CD8-positive, alpha-beta T cell (primary cell): ENCODE measurements at regions of chr17 and their contacts with region 1.

Region 1: DNA sequence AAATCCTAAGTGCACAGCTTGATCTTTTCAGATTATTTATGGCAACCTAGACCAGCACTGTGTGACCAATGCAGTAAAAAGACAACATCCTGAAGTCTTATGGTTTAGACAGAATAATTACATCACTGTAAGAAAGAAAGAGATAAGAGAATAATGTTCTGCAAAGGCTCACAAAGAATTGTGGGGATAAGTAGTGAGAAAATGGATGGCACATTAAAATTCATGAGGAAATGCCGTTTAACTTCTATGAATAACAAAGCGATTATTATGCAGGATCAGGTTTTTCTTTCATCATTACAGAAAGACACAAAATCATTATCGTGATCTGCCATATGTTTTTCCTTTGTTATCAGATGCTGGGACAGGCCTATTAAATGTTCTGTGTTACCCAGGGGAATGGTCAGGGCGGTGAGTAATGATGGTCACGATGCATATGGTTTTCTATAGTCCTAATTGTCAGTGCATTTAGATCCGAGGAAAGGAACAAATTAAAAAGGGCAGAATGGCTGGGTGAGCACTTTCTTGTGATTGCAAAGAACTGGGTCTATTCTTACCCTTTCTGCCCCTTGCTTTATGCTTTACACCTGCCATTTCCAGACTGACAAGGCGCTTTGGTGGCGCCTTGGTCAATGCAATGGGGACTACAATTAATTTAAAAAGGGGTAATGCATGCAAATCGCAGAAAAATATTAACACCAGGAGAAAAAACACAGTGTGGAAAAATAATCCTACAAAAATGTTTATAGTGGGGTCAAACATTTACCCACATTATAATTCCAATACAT is 18.1 kb upstream of the DHX40 start:
- DNase-seq: no peak
- ATAC-seq: no peak
- H3K4me3 ChIP-seq: no peak overlapping the region
- H3K4me3 Mint-ChIP-seq: no peak overlapping the region
- H3K27ac ChIP-seq: no peak overlapping the region
- H3K27ac Mint-ChIP-seq: no peak overlapping the region
- H3K4me1 ChIP-seq: no peaks in the 10 kb centered on the region
- H3K4me1 Mint-ChIP-seq: no peaks in the 10 kb centered on the region
- H3K27me3 ChIP-seq: no peaks in the 10 kb centered on the region
- H3K27me3 Mint-ChIP-seq: peaks cover 12% of the 10 kb centered on the region
- CTCF ChIP-seq: no peak

Region 2: GRCh38 chr17:59487161-59487873 is 60.0 kb before region 1 on chr17:
- CTCF ChIA-PET with region 1: no interaction called
- POLR2A ChIA-PET with region 1: no interaction called
- intact Hi-C with region 1: loop called in 1 of 2 experiments (anchors 10 kb)
- DNase-seq: no peak
- ATAC-seq: no peak
- H3K4me3 ChIP-seq: no peak overlapping the region
- H3K4me3 Mint-ChIP-seq: no peak overlapping the region
- H3K27ac ChIP-seq: no peak overlapping the region
- H3K27ac Mint-ChIP-seq: no peak overlapping the region
- H3K4me1 ChIP-seq: no peaks in the 10 kb centered on the region
- H3K4me1 Mint-ChIP-seq: peaks cover 4% of the 10 kb centered on the region
- H3K27me3 ChIP-seq: no peaks in the 10 kb centered on the region
- H3K27me3 Mint-ChIP-seq: peaks cover 9% of the 10 kb centered on the region
- CTCF ChIP-seq: no peak